ENCODE measurements at regions of chr12 and their contacts with region 1.

Region 1: DNA sequence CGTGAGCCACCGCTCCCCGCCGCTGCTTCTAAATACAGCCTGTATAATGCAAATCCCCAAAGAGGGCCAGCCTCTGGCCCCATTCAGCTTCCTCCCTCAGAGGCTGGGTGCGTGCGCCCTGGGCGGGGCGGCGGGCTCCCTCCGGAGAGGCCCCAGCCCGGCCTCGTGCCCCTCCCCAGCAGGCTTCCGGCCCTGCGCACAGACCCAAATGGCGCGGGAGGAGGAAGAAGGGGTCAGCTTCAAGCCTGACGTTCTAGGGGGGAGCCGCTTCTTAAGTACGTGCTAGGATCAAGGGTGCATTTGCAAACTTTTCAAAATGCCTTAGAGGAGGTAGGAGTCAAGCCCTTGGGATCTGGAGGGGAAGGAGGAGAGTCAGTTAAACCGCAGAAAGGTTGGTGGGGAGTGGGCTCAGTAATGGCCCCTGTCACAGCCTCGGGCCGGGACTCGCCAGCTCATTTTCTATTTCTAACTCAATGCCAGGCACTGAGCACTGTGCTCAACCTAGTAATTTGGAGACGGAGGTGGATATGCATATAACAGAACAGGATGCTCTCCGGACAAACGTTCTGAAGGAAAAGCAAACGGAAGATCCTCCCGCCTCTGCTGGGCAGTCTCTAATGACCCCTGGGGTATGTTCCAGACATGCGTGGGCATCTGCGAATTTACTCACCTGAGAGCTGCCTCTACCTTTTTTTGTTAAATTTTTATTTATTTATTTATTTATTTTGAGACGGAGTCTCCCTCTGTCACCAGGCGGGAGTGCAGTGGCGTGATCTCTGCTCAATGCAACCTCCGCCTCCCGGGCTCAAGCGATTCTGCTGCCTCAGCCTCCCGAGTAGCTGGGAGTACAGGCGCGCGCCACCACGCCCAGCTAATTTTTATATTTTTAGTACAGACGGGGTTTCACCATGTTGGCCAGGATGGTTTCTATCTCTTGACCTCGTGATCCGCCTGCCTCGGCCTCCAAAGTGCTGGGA is 32.3 kb downstream of the NINJ2 start:
- DNase-seq: peak in 13 of 14 experiments; percentile 41 to 85 (median 66)
- ATAC-seq: peak; percentile 95
- H3K4me3 ChIP-seq: no peak overlapping the region
- H3K4me3 Mint-ChIP-seq: peak overlapping the region; percentile 96
- H3K27ac ChIP-seq: peak overlapping the region in 1 of 2 donors; percentile 60
- H3K27ac Mint-ChIP-seq: peak overlapping the region; percentile 98
- H3K4me1 ChIP-seq: peaks cover 37% of the 10 kb centered on the region
- H3K4me1 Mint-ChIP-seq: peaks cover 41% of the 10 kb centered on the region
- H3K27me3 ChIP-seq: no peaks in the 10 kb centered on the region
- H3K27me3 Mint-ChIP-seq: no peaks in the 10 kb centered on the region
- CTCF ChIP-seq: no peak

Region 2: GRCh38 chr12:614411-614970 is 16.5 kb before region 1 on chr12:
- CTCF ChIA-PET with region 1: interaction called, 5 read pairs
- POLR2A ChIA-PET with region 1: interaction called, 12 read pairs
- intact Hi-C with region 1: no loop called
- DNase-seq: peak in 12 of 14 experiments; percentile 10 to 66 (median 24)
- ATAC-seq: peak; percentile 58
- H3K4me3 ChIP-seq: no peak overlapping the region
- H3K4me3 Mint-ChIP-seq: no peak overlapping the region
- H3K27ac ChIP-seq: no peak overlapping the region
- H3K27ac Mint-ChIP-seq: no peak overlapping the region
- H3K4me1 ChIP-seq: peaks cover 36% of the 10 kb centered on the region
- H3K4me1 Mint-ChIP-seq: peaks cover 44% of the 10 kb centered on the region
- H3K27me3 ChIP-seq: no peaks in the 10 kb centered on the region
- H3K27me3 Mint-ChIP-seq: no peaks in the 10 kb centered on the region
- CTCF ChIP-seq: peak; percentile 60

Region 3: DNA sequence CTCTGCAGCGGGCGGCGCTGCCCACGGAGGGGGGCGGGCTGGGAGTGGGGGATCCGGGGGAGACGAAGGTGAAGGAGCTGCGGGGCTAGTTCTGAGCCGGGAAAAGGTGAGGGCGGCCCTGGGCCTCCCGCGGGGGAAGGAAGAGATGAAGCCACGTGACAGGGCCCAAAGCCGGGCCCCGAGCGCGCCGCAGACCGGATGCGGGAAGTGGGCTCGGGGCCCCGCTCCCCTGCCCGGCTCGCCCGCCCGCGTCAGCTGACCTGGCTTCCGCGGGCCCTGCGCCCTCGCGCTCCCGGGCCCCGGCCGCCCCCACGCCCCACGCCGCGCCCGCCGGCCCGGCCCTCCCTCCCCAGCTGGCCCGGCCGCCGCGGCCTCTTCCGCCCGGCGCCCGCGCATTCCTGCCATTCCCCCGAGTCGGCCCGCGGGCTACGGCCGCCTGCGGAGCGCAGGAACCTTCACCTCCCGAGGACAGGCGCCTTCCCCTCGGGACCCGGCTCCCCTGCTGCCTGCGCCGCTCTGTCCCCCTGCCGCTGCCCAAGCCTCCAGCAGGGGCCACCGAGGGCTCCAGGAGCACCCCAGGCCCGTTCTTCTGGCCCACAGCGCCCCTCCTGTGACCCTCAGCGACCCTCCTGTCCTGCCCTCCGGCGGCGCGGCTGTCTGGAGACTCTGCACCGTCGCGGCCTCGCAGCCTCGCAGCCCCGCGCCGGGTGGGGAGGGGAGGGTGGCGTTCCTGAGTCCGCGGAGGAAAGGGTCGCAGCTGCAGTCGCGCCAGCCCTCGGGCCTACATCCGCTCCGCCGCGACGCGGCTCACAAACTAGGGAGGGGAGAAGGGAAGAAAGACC is 11.9 kb after region 1 on chr12:
- CTCF ChIA-PET with region 1: interaction called, 4 read pairs
- POLR2A ChIA-PET with region 1: interaction called, 55 read pairs
- intact Hi-C with region 1: no loop called
- DNase-seq: peak; percentile 49 to 92 (median 76)
- ATAC-seq: peak; percentile 74
- H3K4me3 ChIP-seq: peak overlapping the region; percentile 67
- H3K4me3 Mint-ChIP-seq: peak overlapping the region; percentile 84
- H3K27ac ChIP-seq: peak overlapping the region; percentile 84 to 85
- H3K27ac Mint-ChIP-seq: peak overlapping the region; percentile 93
- H3K4me1 ChIP-seq: peaks cover 63% of the 10 kb centered on the region
- H3K4me1 Mint-ChIP-seq: peaks cover 63% of the 10 kb centered on the region
- H3K27me3 ChIP-seq: no peaks in the 10 kb centered on the region
- H3K27me3 Mint-ChIP-seq: no peaks in the 10 kb centered on the region
- CTCF ChIP-seq: peak; percentile 15

Region 4: DNA sequence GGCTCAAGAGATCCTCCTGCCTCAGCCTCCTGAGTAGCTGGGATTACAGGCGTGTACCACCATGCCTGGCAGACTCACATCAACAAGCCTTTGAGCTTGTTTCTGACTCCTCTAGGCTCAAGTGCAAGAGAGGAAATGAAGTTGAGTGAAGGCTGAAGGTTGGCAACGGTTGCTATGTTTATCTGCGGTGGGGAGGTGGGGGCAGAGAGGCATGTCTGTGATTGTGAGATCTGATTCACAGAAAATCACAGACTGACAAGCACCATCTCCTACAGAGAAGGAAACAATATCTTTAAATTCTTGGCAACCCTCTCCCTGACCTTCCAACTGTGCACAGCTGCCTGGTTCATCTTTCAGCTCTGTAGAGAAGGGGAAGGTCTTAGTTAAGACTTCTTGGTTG is 54.4 kb after region 1 on chr12:
- CTCF ChIA-PET with region 1: no interaction called
- POLR2A ChIA-PET with region 1: interaction called, 14 read pairs
- intact Hi-C with region 1: no loop called
- DNase-seq: peak; percentile 70 to 96 (median 78)
- ATAC-seq: peak; percentile 92
- H3K4me3 ChIP-seq: peak overlapping the region; percentile 7
- H3K4me3 Mint-ChIP-seq: peak overlapping the region; percentile 39
- H3K27ac ChIP-seq: peak overlapping the region; percentile 75 to 93
- H3K27ac Mint-ChIP-seq: peak overlapping the region; percentile 91
- H3K4me1 ChIP-seq: peaks cover 27% of the 10 kb centered on the region
- H3K4me1 Mint-ChIP-seq: peaks cover 60% of the 10 kb centered on the region
- H3K27me3 ChIP-seq: no peaks in the 10 kb centered on the region
- H3K27me3 Mint-ChIP-seq: no peaks in the 10 kb centered on the region
- CTCF ChIP-seq: no peak

Region 5: DNA sequence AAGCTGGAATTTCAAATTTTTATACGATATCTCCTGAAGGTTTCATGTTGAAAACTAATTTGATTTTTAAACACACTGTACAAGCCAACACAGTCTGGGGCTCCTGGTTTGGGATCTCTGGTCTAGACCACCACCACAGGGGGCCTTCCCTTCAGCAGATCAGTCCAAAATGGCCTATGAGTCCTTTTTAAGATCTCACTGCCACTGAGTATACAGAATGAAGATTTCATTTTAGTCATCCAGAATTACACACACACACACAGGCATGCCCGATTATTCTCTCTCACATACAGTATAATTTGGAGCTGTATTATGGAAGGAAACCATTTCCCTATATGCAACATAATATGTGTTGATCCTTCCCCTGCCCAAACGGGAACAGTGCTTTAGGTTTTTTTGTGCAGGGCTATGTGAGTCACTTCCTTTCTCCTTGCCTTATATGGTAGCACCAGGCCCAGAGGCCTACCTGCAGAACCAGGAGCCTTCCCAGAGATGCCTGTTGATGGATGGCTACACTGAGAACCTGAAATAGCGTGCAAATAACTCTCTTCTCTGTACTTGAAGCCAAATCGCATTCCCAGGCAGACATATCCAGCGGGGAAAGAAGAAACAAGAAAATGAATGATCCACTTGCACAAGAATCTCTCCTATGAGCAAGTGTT is 93.4 kb after region 1 on chr12:
- CTCF ChIA-PET with region 1: interaction called, 3 read pairs
- POLR2A ChIA-PET with region 1: interaction called, 10 read pairs
- intact Hi-C with region 1: no loop called
- DNase-seq: peak in 7 of 14 experiments; percentile 5 to 63 (median 54)
- ATAC-seq: peak; percentile 55
- H3K4me3 ChIP-seq: no peak overlapping the region
- H3K4me3 Mint-ChIP-seq: no peak overlapping the region
- H3K27ac ChIP-seq: no peak overlapping the region
- H3K27ac Mint-ChIP-seq: peak overlapping the region; percentile 87
- H3K4me1 ChIP-seq: peaks cover 47% of the 10 kb centered on the region
- H3K4me1 Mint-ChIP-seq: peaks cover 89% of the 10 kb centered on the region
- H3K27me3 ChIP-seq: no peaks in the 10 kb centered on the region
- H3K27me3 Mint-ChIP-seq: no peaks in the 10 kb centered on the region
- CTCF ChIP-seq: no peak

Region 6: DNA sequence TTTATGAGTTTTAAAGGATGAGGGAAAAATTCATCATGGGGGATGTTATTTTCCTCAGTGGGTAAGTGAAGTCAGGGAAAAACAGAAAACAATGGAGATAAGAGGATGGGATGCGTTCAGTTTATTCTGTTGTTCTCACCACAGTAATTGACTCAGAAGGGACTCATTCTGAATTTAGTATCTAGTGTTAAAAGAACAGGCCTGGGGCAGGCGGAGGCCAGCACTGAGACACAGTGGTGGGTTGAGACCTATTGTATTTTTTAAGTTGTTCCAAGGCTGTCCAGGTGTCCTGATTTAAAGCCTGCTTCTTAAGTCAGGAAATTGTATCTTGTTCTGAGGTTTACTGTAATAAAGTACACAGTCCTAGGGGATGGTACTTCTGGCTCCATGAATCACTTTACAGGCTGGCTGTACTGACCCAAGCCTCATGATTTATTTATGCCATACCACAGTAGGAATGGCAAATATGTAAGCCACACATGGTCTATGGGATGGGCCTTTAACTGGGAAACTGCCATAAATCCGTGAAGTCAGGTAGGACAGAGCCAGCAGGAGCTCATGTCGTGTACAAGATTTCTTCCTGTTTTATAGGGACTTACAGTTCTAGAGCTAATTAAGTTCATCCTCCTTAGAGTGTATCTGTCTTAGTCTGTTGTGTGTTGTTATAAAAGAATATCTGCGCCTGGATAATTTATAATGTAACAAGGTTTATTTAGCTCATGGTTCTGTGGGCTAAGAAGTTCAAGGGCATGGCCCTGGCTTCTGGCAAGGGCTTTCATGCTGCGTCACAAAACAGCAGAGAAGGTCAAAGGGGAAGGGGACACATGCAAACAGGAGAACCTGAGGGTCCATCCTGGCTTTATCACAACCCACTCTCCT is 719.4 kb after region 1 on chr12:
- CTCF ChIA-PET with region 1: no interaction called
- POLR2A ChIA-PET with region 1: no interaction called
- intact Hi-C with region 1: no loop called
- DNase-seq: no peak
- ATAC-seq: no peak
- H3K4me3 ChIP-seq: no peak overlapping the region
- H3K4me3 Mint-ChIP-seq: no peak overlapping the region
- H3K27ac ChIP-seq: no peak overlapping the region
- H3K27ac Mint-ChIP-seq: no peak overlapping the region
- H3K4me1 ChIP-seq: no peaks in the 10 kb centered on the region
- H3K4me1 Mint-ChIP-seq: no peaks in the 10 kb centered on the region
- H3K27me3 ChIP-seq: no peaks in the 10 kb centered on the region
- H3K27me3 Mint-ChIP-seq: no peaks in the 10 kb centered on the region
- CTCF ChIP-seq: no peak

Measured in CD4-positive, alpha-beta T cell (primary cell).